ENCODE measurements at regions of chr4 and their contacts with region 1.

Region 1: DNA sequence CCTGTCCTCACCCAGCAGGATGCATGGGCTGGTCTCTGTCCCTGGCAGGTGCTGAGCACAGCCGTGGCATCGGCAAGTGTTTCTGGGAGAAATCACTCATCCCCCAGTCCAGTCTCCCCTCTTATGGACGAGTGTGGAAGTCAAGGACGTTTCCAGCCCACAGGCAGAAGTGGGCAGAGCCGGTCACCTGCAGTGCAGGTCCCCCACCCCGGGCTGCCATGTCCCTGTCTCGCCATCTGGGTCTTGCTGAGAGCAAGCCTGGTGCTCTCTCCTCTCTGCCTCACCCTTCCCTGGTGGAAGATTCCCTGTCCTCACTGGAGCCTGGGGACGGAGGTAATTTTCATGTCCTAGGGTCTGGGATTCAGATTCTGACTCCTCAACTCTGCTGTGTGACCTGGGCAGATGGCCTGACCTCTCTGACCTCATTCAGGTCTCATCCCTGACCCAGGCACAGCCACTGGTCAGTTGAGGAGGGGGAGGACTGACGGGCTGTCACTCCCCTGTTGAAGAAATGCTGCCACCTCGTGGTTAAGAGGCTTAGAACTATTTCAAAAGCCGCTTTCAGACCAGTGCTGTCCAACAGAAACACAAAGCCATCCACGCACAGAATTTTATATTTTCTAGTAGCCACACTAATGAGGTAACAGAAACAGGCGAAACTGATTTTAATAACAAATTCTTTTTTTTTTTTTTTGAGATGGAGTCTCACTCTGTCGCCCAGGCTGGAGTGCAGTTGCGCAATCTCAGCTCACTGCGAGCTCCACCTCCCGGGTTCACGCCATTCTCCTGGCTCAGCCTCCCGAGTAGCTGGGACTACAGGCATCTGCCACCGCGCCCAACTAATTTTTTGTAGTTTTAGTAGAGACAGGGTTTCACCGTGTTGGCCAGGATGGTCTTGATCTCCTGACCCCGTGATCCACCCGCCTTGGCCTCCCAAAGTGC is 1.8 kb downstream of the CPZ start:
- DNase-seq: no peak
- H3K4me3 ChIP-seq: no peak overlapping the region
- H3K27ac ChIP-seq: no peak overlapping the region
- H3K4me1 ChIP-seq: peaks cover 13% of the 10 kb centered on the region
- H3K27me3 ChIP-seq: peaks cover 95% of the 10 kb centered on the region
- CTCF ChIP-seq: peak; percentile 73

Region 2: GRCh38 chr4:8241895-8242696 is 352.3 kb before region 1 on chr4:
- intact Hi-C with region 1: loop called (anchors 10 kb)
- DNase-seq: peak; percentile 88
- H3K4me3 ChIP-seq: no peak overlapping the region
- H3K27ac ChIP-seq: peak overlapping the region; percentile 66
- H3K4me1 ChIP-seq: peaks cover 22% of the 10 kb centered on the region
- H3K27me3 ChIP-seq: no peaks in the 10 kb centered on the region
- CTCF ChIP-seq: peak; percentile 99

Region 3: DNA sequence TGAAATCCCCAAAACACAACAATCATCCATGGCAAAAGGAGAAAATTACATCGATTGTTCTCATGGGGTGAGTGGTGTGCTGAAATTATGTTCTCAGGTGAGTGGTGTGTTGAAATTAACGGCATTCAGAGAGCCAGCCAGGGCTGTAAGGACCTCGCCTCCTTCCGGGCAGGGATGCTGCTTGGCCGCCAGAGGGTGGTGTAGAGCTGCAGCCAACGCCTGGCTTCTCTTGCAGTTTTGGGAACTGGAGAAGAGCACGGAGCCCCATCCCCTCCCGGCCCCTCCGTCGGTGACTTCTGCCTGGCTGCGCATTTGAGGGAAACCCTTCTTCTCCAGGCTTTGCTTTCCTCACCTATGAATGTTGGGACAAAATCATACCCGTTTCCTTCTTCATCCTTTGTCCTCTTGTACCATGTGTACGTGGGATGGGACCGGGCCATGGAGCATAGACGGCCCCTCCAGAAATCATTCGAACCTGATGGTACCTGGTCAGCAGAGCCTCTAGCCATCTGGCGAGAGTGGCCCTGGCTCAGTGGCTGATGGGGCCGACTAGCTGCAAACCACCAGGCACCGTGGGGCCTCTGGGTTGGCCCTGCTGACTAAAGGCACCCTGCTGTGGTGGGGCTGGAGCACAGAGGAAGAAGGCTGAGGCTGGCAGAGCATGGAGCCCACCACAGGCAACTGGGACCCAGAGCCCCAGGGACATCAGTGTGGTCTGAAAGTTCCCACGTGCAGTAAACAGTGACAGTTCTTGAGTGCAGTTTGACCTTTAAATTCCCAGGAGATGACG is 125.4 kb before region 1 on chr4:
- intact Hi-C with region 1: loop called (anchors 10 kb)
- DNase-seq: peak; percentile 40
- H3K4me3 ChIP-seq: no peak overlapping the region
- H3K27ac ChIP-seq: no peak overlapping the region
- H3K4me1 ChIP-seq: peaks cover 16% of the 10 kb centered on the region
- H3K27me3 ChIP-seq: no peaks in the 10 kb centered on the region
- CTCF ChIP-seq: peak; percentile 93

Region 4: GRCh38 chr4:8854931-8855330 is 260.6 kb after region 1 on chr4:
- intact Hi-C with region 1: no loop called
- DNase-seq: no peak
- H3K4me3 ChIP-seq: no peak overlapping the region
- H3K27ac ChIP-seq: no peak overlapping the region
- H3K4me1 ChIP-seq: peaks cover 22% of the 10 kb centered on the region
- H3K27me3 ChIP-seq: peaks cover 100% of the 10 kb centered on the region
- CTCF ChIP-seq: no peak